Dorsolateral prefrontal cortex (tissue), 120 donors: ENCODE measurements at regions of chr7 and their contacts with region 1.

Region 1: GRCh38 chr7:71131256-71132126 is 453 bp upstream of the GALNT17 start:
- DNase-seq: peak; percentile 41 to 82 (median 72)
- H3K4me3 ChIP-seq: peak overlapping the region; percentile 22 to 74 (median 61)
- H3K27ac ChIP-seq: peak overlapping the region in 50 of 59 donors; percentile 5 to 89 (median 72)
- H3K27me3 ChIP-seq: peaks cover 0 to 57% (median 17%) of the 10 kb centered on the region in 45 donors
- CTCF ChIP-seq: peak in 9 of 56 donors; percentile 3 to 27 (median 12)

Region 2: DNA sequence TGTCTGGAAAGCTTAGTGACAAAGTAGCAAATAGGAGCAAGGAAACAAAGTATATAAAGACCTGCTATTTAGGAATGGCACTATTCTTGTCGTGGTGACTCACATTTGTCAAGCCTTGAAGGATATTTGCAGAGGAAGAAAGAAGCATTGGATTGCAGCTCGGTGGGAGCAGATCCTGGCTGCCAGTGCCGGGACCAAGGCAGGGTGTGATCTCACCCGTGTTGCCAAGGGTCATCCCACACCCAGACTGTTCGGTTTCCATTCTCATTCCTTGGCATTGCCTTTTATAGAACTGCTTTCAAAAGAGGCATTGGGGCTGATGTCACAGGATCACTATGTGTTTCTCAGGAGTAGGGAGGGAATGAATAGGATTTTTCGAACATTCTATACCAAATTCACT is 176.6 kb after region 1 on chr7:
- intact Hi-C with region 1: loop called in 1 of 2 experiments (anchors 5 kb)
- DNase-seq: peak in 9 of 10 donors; percentile 32 to 75 (median 57)
- H3K4me3 ChIP-seq: no peak overlapping the region
- H3K27ac ChIP-seq: peak overlapping the region in 48 of 59 donors; percentile 7 to 86 (median 66)
- H3K27me3 ChIP-seq: no peaks in the 10 kb centered on the region
- CTCF ChIP-seq: no peak

Region 3: GRCh38 chr7:71408271-71408670 is 276.8 kb after region 1 on chr7:
- intact Hi-C with region 1: loop called in 1 of 2 experiments (anchors 5 kb)
- DNase-seq: peak in 9 of 10 donors; percentile 26 to 86 (median 66)
- H3K4me3 ChIP-seq: no peak overlapping the region
- H3K27ac ChIP-seq: peak overlapping the region in 1 of 59 donors; percentile 43
- H3K27me3 ChIP-seq: no peaks in the 10 kb centered on the region
- CTCF ChIP-seq: no peak

Region 4: DNA sequence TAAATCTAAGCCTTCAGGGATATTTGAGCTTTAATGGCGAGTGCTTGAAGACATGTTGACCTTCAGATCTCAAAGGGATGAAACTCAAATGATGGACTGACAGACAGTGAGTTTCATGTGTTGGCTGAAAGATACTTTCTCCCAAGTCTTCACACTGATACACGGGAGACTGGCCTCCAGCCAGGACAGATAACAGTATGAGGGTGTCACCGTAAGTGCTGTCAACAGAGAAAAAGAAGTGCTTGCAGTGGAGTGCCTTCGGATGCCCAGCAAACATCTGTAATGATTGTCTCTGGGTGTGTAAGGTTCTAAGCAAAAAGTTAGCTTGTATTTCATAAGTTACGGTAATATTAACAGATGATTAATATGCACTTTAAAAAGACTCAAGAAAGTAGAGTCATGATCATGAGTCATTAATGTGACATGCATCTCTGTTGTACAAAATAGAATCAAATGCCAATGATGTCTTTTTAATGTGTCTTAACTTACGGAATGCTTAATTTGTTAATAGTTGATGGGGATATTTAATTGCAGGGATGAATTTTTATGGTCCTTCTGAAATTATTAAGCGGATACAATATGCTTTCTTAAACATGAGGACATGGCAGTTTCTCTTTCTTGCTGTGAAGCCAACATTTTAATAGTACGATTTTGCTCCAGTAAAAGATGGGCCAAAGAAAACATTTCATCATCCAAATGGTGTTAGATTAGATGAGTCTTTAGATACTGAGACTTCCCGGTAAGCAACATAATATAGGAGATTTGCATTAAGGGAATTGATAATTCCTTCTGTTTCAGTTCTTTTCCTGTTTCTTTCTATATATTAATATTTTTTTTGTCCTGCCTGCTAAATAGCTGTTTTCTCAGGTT is 292.9 kb after region 1 on chr7:
- intact Hi-C with region 1: no loop called
- DNase-seq: no peak
- H3K4me3 ChIP-seq: no peak overlapping the region
- H3K27ac ChIP-seq: no peak overlapping the region
- H3K27me3 ChIP-seq: no peaks in the 10 kb centered on the region
- CTCF ChIP-seq: no peak